Adrenal gland (tissue), 19 donors: ENCODE measurements at regions of chr14 and their contacts with region 1.

Region 1: DNA sequence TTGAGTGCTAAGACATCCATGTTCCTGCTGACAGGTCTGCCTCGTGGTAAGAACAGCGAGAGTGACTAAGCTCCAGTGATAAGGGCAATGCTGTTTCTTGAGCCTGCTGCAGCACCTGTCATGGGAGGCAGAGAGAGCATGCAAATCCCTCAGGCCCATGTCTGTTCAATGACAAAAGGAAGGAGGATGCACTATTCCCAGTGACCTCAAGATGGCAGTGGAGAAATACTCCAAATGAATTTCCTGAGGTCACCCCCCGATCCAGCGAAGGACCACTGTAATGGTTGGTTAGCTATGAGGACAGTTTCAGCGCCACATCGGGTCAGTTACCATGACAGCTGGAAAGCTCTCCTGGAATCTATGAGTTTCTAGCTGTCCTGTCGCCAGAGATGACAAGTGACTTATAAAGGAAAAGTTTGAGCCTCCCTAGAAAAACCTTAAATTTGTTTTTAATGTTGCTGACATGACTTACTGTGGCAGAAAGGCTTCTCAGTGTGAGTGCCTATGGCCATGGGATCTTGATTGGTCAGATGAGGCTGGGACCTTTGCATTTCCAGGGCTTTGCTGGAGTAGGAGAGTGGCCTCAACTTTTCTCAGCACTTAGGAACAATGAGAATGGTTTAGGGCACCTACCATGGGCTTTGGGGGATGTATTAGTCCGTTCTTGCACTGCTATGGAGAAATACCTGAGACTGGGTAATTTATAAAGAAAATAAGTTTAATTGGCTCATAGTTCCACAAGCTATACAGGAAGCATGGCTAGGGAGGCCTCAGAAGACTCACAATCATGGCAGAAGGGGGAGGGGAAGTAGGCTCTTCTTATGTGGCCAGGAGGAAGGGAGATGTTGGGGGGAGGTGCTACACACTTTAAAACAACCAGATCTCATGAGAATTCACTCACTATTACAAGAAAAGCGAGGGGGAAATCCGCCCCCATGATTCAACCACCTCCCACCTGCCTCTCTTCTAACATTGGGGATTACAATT is 88.0 kb upstream of the TMEM260 start:
- DNase-seq: peak; percentile 28 to 67 (median 34)
- H3K4me3 ChIP-seq: no peak overlapping the region
- H3K27ac ChIP-seq: no peak overlapping the region
- H3K4me1 ChIP-seq: no peaks in the 10 kb centered on the region
- H3K27me3 ChIP-seq: no peaks in the 10 kb centered on the region
- CTCF ChIP-seq: peak; percentile 38 to 64 (median 57)
- POLR2A ChIP-seq: no peak

Region 2: DNA sequence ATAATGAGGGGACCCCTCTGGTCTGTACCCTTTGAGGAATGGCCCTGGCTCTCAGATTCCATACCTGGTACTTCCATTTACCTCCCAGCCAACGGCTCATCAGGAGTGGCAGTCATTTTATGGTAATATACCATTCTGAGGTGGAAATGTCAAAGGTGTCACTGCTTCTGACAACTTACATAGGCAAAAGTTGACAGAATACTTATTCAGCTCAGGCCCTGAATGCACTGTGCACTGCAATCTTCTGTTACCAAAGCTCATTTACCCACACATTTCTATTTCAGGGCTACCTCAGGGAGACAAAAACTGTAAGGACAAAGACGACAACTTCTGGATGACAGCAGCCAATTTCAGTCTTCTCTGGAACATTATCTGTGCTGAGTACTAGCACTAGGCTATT is 124.2 kb before region 1 on chr14:
- intact Hi-C with region 1: no loop called
- DNase-seq: no peak
- H3K4me3 ChIP-seq: no peak overlapping the region
- H3K27ac ChIP-seq: no peak overlapping the region
- H3K4me1 ChIP-seq: no peaks in the 10 kb centered on the region
- H3K27me3 ChIP-seq: no peaks in the 10 kb centered on the region
- CTCF ChIP-seq: no peak
- POLR2A ChIP-seq: no peak

Region 3: GRCh38 chr14:57314396-57315089 is 823.0 kb after region 1 on chr14:
- intact Hi-C with region 1: loop called in 1 of 2 experiments (anchors 5 kb)
- DNase-seq: no peak
- H3K4me3 ChIP-seq: no peak overlapping the region
- H3K27ac ChIP-seq: no peak overlapping the region
- H3K4me1 ChIP-seq: no peaks in the 10 kb centered on the region
- H3K27me3 ChIP-seq: no peaks in the 10 kb centered on the region
- CTCF ChIP-seq: no peak
- POLR2A ChIP-seq: no peak